AG04449 (cell line): ENCODE measurements at regions of chr6 and their contacts with region 1.

Region 1: GRCh38 chr6:29724937-29725869 is 2.0 kb downstream of the HLA-F start:
- DNase-seq: no peak
- H3K4me3 ChIP-seq: no peak overlapping the region
- CTCF ChIP-seq: no peak

Region 2: DNA sequence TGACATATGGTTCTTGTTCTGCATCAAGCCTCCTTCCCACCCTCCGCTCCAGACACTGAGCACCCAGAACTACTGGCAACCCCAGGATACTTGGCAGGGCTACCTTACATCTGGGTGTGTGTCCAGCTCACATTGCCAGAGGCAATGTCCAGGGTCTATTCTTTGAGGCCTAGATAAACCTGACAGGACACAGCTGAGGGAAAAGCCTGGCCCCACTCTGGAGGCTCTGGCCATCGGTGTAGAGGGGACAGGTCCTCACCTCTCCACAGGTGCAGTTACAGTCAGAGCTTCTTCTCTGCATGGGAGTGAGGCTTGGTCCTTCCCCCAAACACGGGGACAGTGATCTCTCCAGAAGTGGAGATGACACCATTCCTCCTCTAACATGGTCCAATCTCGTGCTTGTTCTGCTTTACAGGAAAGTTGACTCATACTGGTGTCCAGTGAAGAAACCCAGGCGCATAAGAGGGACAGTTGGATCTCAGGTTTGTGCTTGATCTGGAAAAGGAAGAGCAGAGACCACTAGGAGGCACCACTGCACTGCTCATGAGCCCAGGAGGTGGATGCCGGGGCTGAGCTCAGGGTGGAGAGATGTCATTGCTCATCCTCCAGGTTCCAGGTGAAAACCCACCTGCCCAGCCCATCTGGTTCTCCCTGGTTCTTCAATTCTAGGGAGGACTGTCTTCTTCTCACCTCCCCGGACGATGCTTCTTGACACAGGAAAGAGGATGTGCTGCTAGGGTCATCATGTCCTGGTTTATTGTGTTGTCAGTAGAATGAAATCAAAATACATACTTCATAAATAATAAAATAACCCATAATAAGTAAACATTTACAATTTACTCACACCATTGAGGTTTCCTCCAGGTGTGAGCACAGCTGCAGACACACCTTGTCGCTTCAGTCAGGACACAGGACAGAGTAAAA is 12.8 kb after region 1 on chr6:
- CTCF ChIA-PET with region 1: interaction called, 22 read pairs
- POLR2A ChIA-PET with region 1: no interaction called
- DNase-seq: no peak
- H3K4me3 ChIP-seq: no peak overlapping the region
- CTCF ChIP-seq: peak; percentile 78

Region 3: GRCh38 chr6:29769336-29769735 is 44.1 kb after region 1 on chr6:
- CTCF ChIA-PET with region 1: no interaction called
- POLR2A ChIA-PET with region 1: no interaction called
- DNase-seq: no peak
- H3K4me3 ChIP-seq: no peak overlapping the region
- CTCF ChIP-seq: no peak

Region 4: GRCh38 chr6:29886701-29887100 is 161.5 kb after region 1 on chr6:
- CTCF ChIA-PET with region 1: no interaction called
- POLR2A ChIA-PET with region 1: no interaction called
- DNase-seq: no peak
- H3K4me3 ChIP-seq: no peak overlapping the region
- CTCF ChIP-seq: no peak